A549 (cell line): ENCODE measurements at regions of chr5 and their contacts with region 1.

Region 1: DNA sequence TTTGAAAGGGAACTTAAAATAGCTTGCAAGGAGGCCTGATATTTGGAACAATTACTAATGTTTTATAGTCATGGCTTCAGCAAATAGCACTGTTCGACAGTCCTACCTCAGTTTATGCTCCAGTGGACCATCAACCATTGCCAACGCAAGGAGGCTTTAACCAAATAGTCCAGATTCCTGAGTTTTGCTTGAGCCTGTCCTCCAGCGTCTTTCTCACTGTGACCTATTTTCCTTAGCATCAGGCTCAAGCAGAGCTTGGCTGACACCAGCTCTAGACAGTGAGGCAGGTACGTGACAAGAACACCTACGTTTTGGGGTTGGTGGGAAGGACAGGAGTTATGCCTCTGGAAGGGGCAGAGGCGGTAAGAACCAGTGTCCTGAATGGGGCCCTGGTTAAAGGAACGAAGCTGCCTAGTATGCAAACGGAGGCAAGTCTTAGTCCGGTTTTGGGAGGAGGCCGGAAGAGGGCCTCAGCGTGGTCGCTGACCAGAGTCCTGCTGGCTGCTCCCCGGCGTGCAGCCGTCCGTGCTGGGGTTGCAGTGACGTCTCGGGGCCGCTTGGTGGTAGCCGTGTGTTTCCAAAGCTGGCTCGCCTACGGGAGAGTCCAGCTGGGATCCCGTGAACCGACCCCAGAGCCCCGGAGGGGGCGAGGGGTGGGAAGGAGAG is 998 bp upstream of the FGF18 start:
- DNase-seq: peak; percentile 85 to 96
- ATAC-seq: peak; percentile 49 to 81
- H3K4me3 ChIP-seq: peak overlapping the region; percentile 51
- H3K27ac ChIP-seq: peak overlapping the region; percentile 20 to 77; a peak in 3 of 6 replicates
- H3K4me1 ChIP-seq: peaks cover 7% of the 10 kb centered on the region; the same call in 2 of the 3 replicates
- CTCF ChIP-seq: peak; percentile 83
- EP300 ChIP-seq: no peak
- POLR2A ChIP-seq: no peak
- RAD21 ChIP-seq: peak; percentile 85 to 93

Region 2: DNA sequence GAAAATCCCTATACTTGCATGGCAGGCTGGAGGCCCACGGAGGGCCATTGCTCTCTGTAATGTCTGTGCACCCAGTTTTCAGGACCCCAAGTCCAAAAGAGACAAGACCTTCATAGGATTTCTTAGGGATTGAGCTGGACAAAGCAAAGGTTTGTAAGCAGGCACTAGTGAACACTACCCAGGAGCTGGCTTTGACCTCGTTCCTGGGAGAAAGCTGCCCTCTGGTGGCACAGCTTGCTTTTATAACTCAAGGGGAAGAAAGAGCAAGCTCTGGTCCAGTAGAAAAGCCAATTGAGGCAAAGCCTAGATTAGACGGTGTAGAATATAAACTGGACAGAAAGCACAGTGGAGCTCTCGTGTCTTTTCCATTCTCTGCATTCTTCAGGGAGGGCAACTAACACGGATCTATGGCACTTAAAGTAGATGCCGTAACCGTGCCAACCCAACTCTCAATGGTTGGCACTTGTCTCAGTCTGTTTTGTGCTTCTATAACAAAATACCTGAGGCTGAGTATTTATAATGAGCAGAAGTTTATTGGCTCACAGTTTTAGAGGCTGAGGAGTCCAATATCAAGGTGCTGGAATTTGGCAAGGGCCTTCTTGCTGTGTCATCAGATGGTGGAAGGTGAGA is 627.0 kb before region 1 on chr5:
- CTCF ChIA-PET with region 1: no interaction called
- POLR2A ChIA-PET with region 1: no interaction called
- DNase-seq: peak; percentile 53 to 66
- ATAC-seq: peak; percentile 87 to 95
- H3K4me3 ChIP-seq: no peak overlapping the region
- H3K27ac ChIP-seq: no peak overlapping the region
- H3K4me1 ChIP-seq: no peaks in the 10 kb centered on the region
- CTCF ChIP-seq: peak; percentile 73
- EP300 ChIP-seq: no peak
- POLR2A ChIP-seq: no peak
- RAD21 ChIP-seq: peak; percentile 84 to 85

Region 3: GRCh38 chr5:171405601-171406005 is 12.8 kb before region 1 on chr5:
- CTCF ChIA-PET with region 1: interaction called, 13 read pairs
- POLR2A ChIA-PET with region 1: no interaction called
- DNase-seq: peak in 1 of 2 experiments; percentile 47
- ATAC-seq: peak; percentile 60 to 74
- H3K4me3 ChIP-seq: no peak overlapping the region
- H3K27ac ChIP-seq: no peak overlapping the region
- H3K4me1 ChIP-seq: peaks cover 68% of the 10 kb centered on the region
- CTCF ChIP-seq: peak; percentile 46
- EP300 ChIP-seq: no peak
- POLR2A ChIP-seq: no peak
- RAD21 ChIP-seq: no peak

Region 4: DNA sequence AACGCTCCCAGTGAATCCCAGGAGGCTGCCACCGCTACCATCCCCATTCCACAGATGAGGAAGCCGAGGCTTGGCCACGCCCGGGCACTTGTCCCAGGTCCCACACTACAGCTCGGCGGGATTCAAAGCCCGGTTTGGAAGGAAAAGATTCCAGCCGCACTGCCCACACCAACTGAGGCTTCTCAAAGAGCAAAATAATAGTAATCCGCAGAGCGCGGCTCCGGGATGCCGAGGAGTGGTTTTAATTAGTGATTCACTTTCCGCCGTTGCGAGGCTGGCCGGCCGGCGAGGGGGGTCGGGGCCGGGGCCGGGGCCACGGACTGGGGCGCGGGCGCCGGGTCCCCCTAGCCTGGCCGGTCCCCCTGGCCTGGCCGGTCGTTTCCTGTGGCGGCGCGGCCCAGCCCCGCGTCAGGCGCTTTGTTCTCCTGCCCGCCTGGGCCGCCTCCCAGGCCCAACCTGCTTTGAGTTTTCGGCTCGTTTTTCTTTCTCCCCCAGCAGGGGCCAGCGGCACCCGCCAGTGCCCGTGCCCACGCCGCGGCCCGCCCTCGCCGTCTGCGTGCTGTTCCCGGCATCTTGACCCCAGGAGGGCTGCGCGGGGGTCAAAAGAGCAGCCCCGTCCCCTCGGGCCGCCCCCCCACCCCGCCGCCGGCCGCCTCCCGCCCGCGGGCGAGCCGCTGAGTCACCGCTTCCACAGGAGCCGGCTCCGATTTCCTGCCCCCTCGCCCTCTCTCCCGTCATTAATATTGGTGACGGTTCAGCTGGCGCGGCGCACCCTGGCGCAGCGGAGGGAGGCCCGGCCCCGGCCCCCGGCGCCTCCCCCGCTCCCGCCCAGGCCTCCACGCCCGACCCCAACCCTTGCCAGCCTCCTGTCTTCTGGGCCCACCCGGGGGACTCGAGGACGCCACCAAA is 32.2 kb after region 1 on chr5:
- CTCF ChIA-PET with region 1: interaction called, 15 read pairs
- POLR2A ChIA-PET with region 1: no interaction called
- DNase-seq: no peak
- ATAC-seq: no peak
- H3K4me3 ChIP-seq: no peak overlapping the region
- H3K27ac ChIP-seq: no peak overlapping the region
- H3K4me1 ChIP-seq: no peaks in the 10 kb centered on the region
- CTCF ChIP-seq: no peak
- EP300 ChIP-seq: no peak
- POLR2A ChIP-seq: no peak
- RAD21 ChIP-seq: no peak

Region 5: DNA sequence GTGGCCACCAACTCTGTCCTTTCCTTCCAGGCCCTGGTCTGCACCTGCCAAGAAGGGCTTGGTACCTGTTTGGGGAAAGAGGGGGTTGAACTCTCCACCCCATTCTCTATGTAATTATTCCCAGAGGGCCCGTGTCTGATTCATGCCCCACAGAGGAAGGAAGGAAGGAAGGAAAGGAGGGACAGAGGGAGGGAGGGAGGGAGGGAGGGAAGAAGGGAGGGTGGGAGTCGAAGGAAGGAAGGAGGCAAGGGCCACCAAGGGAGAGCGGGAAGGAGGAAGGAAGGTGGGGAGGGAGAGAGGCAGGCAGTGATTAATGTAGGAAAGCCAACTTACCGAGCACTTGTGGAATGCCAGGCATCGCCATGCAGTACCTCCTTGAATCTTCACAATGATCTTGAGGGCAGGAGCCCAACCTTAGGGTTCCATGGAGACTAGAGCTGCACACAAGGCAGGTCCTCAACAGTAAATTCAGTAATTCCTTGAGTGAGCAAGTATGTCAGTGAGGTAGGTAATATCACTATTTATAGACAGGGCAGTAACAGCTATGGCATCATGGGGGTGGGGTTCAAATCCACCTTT is 76.8 kb after region 1 on chr5:
- CTCF ChIA-PET with region 1: interaction called, 10 read pairs
- POLR2A ChIA-PET with region 1: no interaction called
- DNase-seq: no peak
- ATAC-seq: peak; percentile 10 to 30; a peak in 2 of 6 replicates
- H3K4me3 ChIP-seq: no peak overlapping the region
- H3K27ac ChIP-seq: peak overlapping the region; percentile 61 to 85
- H3K4me1 ChIP-seq: peaks cover 15% of the 10 kb centered on the region
- CTCF ChIP-seq: no peak
- EP300 ChIP-seq: no peak
- POLR2A ChIP-seq: no peak
- RAD21 ChIP-seq: no peak

Region 6: GRCh38 chr5:171850324-171851285 is 432.2 kb after region 1 on chr5:
- CTCF ChIA-PET with region 1: interaction called, 30 read pairs
- POLR2A ChIA-PET with region 1: no interaction called
- DNase-seq: peak; percentile 33 to 45
- ATAC-seq: peak; percentile 71 to 79; a peak in 5 of 6 replicates
- H3K4me3 ChIP-seq: no peak overlapping the region
- H3K27ac ChIP-seq: no peak overlapping the region
- H3K4me1 ChIP-seq: no peaks in the 10 kb centered on the region
- CTCF ChIP-seq: peak; percentile 53
- EP300 ChIP-seq: no peak
- POLR2A ChIP-seq: no peak
- RAD21 ChIP-seq: peak; percentile 51 to 58

Region 7: DNA sequence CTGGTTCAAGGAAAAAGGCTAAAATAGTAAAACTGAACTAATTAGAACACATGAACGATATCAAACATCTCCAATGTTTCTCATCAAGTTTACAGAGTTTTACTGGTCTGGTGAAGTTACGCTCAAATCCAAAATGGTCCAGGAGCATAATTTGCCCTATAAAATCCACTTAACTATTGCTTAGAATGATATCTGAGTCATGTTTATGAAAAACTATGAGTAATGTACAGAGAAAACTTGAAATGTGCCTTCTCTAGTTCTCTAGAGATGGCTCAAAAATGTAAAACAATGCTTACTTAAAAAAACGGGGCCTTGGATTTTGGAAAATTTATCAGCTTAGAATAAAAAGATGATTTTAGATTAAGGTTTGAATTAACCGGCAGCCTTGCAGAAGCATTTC is 479.9 kb after region 1 on chr5:
- CTCF ChIA-PET with region 1: interaction called, 10 read pairs
- POLR2A ChIA-PET with region 1: interaction called, 3 read pairs
- DNase-seq: no peak
- ATAC-seq: no peak
- H3K4me3 ChIP-seq: no peak overlapping the region
- H3K27ac ChIP-seq: no peak overlapping the region
- H3K4me1 ChIP-seq: no peaks in the 10 kb centered on the region
- CTCF ChIP-seq: no peak
- EP300 ChIP-seq: no peak
- POLR2A ChIP-seq: no peak
- RAD21 ChIP-seq: no peak

Region 8: GRCh38 chr5:172044631-172045314 is 626.3 kb after region 1 on chr5:
- CTCF ChIA-PET with region 1: interaction called, 10 read pairs
- POLR2A ChIA-PET with region 1: no interaction called
- DNase-seq: no peak
- ATAC-seq: peak in 1 of 2 experiments; percentile 42; a peak in 3 of 6 replicates
- H3K4me3 ChIP-seq: no peak overlapping the region
- H3K27ac ChIP-seq: no peak overlapping the region
- H3K4me1 ChIP-seq: no peaks in the 10 kb centered on the region
- CTCF ChIP-seq: no peak
- EP300 ChIP-seq: no peak
- POLR2A ChIP-seq: no peak
- RAD21 ChIP-seq: 0 out of 5 replicates have a peak, but pooled peaks of 1 of the 2 experiments have one; percentile 15